SK-N-SH (cell line): ENCODE measurements at regions of chr2 and their contacts with region 1.

Region 1: DNA sequence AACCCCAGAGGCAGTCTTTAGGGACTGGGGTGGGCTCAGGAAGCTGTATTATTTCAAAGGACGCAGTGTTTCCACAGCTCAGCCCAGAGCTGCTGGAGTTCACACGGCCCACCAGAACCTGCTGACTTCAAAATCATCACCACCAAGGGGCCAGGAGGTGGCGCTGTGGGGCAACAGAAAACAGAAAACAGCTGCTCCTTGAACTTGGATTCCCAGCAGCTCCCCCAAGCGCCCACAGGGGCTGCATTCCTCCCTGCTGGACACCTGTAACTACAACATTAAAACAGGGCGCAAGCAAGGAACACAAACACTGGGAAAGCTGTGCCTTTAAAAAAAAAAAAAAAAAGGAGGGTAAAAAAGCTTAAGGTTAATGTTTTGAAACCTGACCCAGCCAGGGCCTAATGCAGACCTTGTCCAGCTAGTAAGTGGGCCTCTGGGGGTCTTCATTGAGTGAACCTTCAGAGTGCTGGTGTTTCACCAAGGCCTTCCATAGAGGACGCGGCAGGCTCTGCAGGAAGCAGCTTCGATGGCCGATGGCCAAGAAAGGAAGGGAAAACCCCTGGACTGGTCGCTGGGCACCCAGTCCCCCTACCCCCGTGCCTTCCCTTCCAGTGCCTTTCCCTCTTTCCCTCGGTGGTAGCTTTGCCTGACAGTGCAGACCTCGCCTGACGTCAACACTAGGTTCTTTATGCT is 25.9 kb downstream of the MLPH start:
- DNase-seq: peak; percentile 91
- H3K4me3 ChIP-seq: peak overlapping the region in 1 of 2 experiments; percentile 33; a peak in 1 of 4 replicates
- H3K27ac ChIP-seq: peak overlapping the region in 1 of 2 experiments; percentile 100; a peak in 2 of 4 replicates
- H3K4me1 ChIP-seq: peaks cover 2 to 12% of the 10 kb centered on the region in 2 experiments; a peak in 2 of 4 replicates
- H3K27me3 ChIP-seq: no peaks in the 10 kb centered on the region
- CTCF ChIP-seq: peak; percentile 96
- EP300 ChIP-seq: no peak
- RAD21 ChIP-seq: peak; percentile 93

Region 2: DNA sequence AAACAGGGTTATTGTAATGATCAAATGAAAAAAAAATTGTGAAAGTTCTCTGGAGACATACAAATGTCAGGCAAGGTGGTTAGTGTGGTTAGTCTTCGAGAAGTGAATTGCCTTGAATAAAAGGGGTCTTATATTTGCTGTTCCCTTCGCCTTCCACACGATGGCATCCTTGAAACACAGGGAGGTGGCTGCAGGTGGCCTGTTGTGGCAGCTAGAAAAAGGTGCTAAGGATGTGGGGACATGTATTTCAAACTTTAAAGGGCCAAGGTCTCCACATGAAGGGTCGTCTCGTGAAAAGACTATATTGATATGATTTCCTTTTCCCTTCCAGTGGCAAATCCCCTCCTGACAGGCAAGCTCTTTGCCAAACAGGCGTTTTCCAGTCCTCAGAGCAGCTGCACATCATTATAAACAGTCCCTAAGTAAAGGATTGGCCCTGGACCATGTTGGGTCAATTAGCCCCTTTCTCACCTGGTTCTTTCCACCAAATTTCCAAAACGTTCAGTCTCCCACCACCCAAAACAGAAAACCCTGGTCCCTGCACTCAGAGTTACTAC is 358.8 kb before region 1 on chr2:
- CTCF ChIA-PET with region 1: interaction called, 23 read pairs
- POLR2A ChIA-PET with region 1: no interaction called
- DNase-seq: peak; percentile 70
- H3K4me3 ChIP-seq: no peak overlapping the region
- H3K27ac ChIP-seq: no peak overlapping the region
- H3K4me1 ChIP-seq: peaks cover 19 to 22% of the 10 kb centered on the region in 2 experiments; a peak in 3 of 4 replicates
- H3K27me3 ChIP-seq: no peaks in the 10 kb centered on the region
- CTCF ChIP-seq: peak; percentile 66
- EP300 ChIP-seq: no peak
- RAD21 ChIP-seq: peak; percentile 97

Region 3: GRCh38 chr2:237378650-237379049 is 134.3 kb before region 1 on chr2:
- CTCF ChIA-PET with region 1: no interaction called
- POLR2A ChIA-PET with region 1: no interaction called
- DNase-seq: no peak
- H3K4me3 ChIP-seq: no peak overlapping the region
- H3K27ac ChIP-seq: no peak overlapping the region
- H3K4me1 ChIP-seq: no peaks in the 10 kb centered on the region
- H3K27me3 ChIP-seq: no peaks in the 10 kb centered on the region
- CTCF ChIP-seq: no peak
- EP300 ChIP-seq: no peak
- RAD21 ChIP-seq: no peak

Region 4: DNA sequence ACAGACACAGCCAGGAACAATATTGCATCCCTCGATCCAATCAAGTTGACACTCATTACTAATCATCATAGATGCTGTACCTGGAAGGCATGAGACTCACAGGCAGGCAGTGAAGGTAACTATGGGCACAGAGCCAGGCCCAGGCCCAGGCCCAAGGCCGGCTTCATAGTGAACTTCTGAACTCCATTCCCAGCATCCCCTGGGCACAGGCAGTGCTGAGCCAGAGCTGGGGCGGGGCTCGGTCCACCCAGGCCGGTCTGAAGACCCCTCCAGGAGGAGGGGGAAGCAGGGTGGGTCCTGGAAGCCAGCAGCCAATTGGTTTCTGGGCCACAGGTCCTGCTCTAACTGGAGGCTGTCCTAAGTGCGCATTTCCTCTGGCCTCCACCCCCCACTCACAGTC is 11.7 kb after region 1 on chr2:
- CTCF ChIA-PET with region 1: interaction called, 42 read pairs
- POLR2A ChIA-PET with region 1: no interaction called
- DNase-seq: peak; percentile 33
- H3K4me3 ChIP-seq: no peak overlapping the region
- H3K27ac ChIP-seq: no peak overlapping the region
- H3K4me1 ChIP-seq: peaks cover 0 to 6% of the 10 kb centered on the region in 2 experiments; a peak in 1 of 4 replicates
- H3K27me3 ChIP-seq: no peaks in the 10 kb centered on the region
- CTCF ChIP-seq: no peak
- EP300 ChIP-seq: no peak
- RAD21 ChIP-seq: no peak

Region 5: DNA sequence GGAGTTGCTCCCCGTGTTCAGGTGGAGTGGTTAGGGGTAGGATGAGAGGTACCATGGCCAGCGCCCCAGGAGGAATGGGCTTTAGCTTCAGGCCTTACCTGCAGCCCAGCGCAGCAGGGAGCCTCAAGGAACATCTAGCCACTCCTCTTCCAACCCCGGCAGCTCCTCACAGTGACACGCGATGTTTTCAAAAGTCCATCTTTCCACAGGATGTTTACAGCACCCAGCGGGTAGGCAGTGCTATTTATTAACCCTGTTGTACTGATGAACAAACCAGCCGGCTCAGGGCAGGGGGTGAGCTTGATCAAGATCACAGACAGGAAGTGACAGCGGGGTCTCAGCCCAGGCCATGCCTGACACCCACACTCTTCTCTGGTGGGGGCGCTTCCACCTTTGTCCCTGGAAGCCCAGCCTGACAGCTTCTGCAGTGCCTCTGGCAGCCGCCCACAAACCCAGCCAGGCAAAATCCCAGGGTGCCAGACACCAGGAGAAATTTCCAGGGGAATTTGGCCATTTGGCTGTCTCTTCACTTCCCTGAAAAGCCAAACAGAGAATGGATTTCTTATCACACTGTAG is 35.0 kb after region 1 on chr2:
- CTCF ChIA-PET with region 1: interaction called, 17 read pairs
- POLR2A ChIA-PET with region 1: no interaction called
- DNase-seq: no peak
- H3K4me3 ChIP-seq: no peak overlapping the region
- H3K27ac ChIP-seq: no peak overlapping the region
- H3K4me1 ChIP-seq: peaks cover 0 to 5% of the 10 kb centered on the region in 2 experiments; a peak in 1 of 4 replicates
- H3K27me3 ChIP-seq: no peaks in the 10 kb centered on the region
- CTCF ChIP-seq: no peak
- EP300 ChIP-seq: no peak
- RAD21 ChIP-seq: no peak

Region 6: DNA sequence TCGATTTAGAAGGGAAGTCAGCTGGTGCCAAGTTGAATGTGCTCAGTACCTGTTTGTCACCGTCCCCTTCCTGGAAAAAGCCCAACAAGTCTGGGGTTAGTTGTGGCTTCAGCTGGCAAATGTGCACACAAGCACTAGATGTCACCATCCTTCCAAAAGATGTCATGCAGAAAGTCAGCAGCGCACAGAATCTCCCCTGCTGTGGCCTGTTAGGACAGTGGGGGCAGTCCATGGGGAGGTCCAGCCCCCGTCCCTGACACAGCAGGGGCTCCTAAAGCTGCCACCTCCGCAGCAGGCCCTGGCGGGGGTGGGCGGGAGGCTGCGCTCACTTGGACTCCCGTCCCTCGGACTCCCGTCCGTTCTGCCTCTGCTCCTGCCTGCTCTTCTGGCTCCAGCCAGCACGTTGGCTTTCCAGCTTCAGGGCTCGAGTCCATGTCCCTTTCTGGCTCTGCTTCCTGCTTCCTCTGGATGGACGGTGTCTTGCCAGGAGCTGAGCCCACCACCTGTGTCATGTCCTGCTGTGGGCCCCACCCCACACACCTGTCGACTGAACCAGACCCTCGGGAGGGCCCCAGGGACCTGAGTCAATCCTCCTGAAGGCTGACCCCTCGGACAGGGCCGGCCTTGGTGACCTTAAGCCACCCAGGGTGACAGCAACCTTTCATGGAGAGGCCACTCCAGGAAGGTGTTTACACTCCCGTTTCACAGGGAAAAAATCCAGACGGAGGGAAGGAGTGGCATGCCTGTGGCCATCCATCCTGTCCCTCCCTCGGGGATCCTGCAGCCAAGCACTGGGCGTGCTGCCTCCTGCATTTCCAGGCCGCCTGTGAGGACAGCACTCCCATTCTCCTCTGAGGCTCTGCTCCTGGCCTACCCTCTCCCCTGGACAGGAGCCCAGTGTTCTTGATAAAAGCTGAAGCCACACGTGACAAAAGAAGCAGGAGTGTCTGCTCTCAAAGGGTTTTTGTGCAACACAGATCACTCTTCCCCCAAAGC is 69.1 kb after region 1 on chr2:
- CTCF ChIA-PET with region 1: interaction called, 311 read pairs
- POLR2A ChIA-PET with region 1: no interaction called
- DNase-seq: peak; percentile 69
- H3K4me3 ChIP-seq: no peak overlapping the region
- H3K27ac ChIP-seq: peak overlapping the region in 1 of 2 experiments; percentile 77; a peak in 1 of 4 replicates
- H3K4me1 ChIP-seq: peaks cover 0 to 21% of the 10 kb centered on the region in 2 experiments; a peak in 1 of 4 replicates
- H3K27me3 ChIP-seq: no peaks in the 10 kb centered on the region
- CTCF ChIP-seq: peak; percentile 61
- EP300 ChIP-seq: no peak
- RAD21 ChIP-seq: peak; percentile 77

Region 7: DNA sequence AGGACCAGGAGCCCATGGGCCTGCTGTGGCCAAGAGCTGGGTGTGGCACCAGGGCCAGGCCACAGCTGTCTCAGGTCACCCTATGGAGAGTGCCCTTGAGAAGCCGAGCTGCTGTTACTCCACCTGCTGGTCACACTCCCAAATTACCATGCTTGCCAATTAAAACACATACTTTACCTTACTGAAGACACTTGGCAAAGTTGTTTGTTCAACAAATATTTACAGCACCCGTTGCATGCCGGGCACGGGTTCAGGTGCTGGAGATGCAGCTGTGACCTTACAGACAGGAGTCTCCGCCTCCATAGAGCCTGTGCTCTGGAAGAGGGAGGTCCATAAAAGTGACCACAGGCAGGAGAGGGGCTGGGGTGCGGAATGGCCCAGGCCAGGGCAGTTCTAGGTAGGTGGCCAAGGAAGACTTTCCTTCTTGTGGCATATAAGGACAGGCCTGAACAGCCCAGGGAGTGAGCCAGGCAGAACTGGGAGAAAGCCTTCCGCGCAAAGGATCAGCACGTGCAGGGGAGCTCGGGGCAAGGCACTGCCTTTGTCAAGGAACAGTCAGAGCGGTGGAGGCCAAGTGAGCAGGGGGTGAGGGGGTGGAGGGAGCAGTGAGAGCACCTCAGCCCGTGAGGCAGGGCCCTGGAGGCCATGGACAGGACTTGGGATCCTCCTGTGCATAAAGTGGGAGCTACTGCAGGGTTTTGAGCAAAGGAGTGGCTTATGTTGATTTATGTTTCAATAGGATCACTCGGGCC is 262.1 kb after region 1 on chr2:
- CTCF ChIA-PET with region 1: interaction called, 15 read pairs
- POLR2A ChIA-PET with region 1: no interaction called
- DNase-seq: peak; percentile 75
- H3K4me3 ChIP-seq: no peak overlapping the region; a peak in 1 of 4 replicates
- H3K27ac ChIP-seq: no peak overlapping the region; a peak in 1 of 4 replicates
- H3K4me1 ChIP-seq: no peaks in the 10 kb centered on the region; a peak in 1 of 4 replicates
- H3K27me3 ChIP-seq: no peaks in the 10 kb centered on the region
- CTCF ChIP-seq: peak; percentile 70
- EP300 ChIP-seq: no peak
- RAD21 ChIP-seq: peak; percentile 67